HAP-1 (cell line): ENCODE measurements at regions of chr1 and their contacts with region 1.

Region 1: GRCh38 chr1:39538588-39539465 is 37.8 kb downstream of the PABPC4 start:
- DNase-seq: peak; percentile 56 to 75
- H3K4me3 ChIP-seq: no peak overlapping the region
- H3K4me1 ChIP-seq: no peaks in the 10 kb centered on the region
- H3K27me3 ChIP-seq: no peaks in the 10 kb centered on the region

Region 2: DNA sequence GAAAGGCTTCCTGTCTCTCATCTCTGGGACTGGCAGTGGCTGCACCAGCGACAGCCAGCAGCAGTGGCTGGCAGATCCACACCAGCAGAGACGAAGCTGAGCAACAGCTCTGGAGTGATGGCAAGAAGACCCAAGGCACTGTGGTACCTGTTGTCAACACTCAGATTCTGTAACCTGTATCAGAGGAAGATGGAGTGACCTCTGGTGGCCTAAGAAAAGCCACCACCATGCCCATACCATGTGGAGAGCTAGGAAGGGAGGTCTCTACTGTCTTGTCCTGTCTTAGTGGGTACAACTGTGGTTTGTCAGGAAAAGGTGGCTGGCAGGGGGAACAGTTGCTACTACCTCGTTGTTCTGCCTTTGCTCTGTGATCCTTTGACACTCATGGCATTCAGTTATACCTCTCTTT is 574.7 kb before region 1 on chr1:
- in situ Hi-C with region 1: no loop called
- DNase-seq: no peak
- H3K4me3 ChIP-seq: no peak overlapping the region
- H3K4me1 ChIP-seq: peaks cover 5% of the 10 kb centered on the region; the same call in 1 of the 2 replicates
- H3K27me3 ChIP-seq: no peaks in the 10 kb centered on the region

Region 3: GRCh38 chr1:38990738-38991639 is 547.8 kb before region 1 on chr1 and contains the start of gene AKIRIN1:
- in situ Hi-C with region 1: no loop called
- DNase-seq: peak; percentile 89 to 99
- H3K4me3 ChIP-seq: peak within 1 kb of the TSS; percentile 72
- H3K4me1 ChIP-seq: peaks cover 20% of the 10 kb centered on the region
- H3K27me3 ChIP-seq: no peaks in the 10 kb centered on the region

Region 4: DNA sequence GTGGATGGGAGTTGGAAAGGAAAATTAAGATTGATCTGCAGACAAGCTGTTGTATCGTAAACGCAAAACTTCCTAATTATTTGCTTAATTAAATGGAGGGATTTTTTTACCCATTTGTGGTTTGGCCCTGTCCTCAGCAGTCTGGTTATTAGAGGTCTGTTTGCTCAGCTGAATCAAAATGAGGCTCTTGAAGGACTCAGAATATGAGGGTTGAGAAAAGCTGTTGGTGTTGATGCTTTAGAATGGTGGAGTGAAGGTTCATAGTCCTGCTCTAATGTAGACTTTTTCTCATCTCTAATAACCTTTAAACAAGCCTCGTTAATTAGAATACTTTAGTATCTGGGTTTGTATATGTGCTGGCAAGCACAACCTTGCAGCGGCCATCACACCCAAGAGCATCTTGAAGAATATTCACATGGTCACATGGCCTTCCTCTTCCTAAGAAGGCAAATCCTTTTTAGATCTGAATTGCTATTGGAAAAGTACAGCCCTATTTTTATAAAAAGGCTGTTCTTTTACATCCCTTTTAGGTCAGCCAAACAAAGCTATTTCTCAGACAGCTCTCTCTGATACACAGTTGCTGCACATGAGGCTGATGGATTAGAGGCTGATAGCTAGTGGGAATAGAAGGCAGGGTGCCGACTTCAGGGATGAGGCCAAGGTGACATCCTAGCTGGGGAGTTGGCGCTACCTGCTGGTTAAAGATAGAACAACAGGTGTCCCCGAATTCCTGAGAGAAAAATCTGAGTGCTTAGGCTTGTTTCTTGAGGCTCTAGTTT is 280.5 kb before region 1 on chr1:
- in situ Hi-C with region 1: loop called (anchors 25 kb)
- DNase-seq: peak; percentile 61 to 79
- H3K4me3 ChIP-seq: no peak overlapping the region
- H3K4me1 ChIP-seq: no peaks in the 10 kb centered on the region
- H3K27me3 ChIP-seq: 0 out of 2 replicates have a peak, but pooled peaks cover 3% of the 10 kb centered on the region

Region 5: DNA sequence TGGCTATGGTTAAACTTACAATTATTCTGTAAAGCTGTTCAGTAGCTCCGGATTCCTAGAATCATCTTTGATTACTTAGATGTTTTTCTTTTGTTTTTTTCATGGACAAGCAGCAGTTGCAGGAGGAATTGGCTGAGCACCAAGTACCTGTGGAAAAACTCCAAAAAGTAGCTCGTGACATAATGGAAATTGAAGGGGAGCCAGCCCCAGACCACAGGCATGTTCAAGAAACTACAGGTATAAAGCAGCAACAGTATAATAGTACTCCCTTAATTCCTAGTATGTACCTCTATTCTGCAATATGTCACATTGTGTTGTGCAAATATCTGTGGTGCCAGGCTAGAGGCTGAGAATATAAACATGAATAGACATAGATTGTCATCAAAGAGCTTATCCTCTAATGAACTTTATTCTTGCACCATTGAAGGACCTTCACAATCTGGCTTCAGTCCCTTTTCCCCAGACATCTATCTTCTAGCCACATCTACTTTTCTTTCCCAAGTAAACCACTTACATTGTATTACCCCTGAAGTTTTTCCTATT is 179.7 kb before region 1 on chr1:
- in situ Hi-C with region 1: no loop called
- DNase-seq: no peak
- H3K4me3 ChIP-seq: no peak overlapping the region
- H3K4me1 ChIP-seq: no peaks in the 10 kb centered on the region
- H3K27me3 ChIP-seq: no peaks in the 10 kb centered on the region